ENCODE measurements at regions of chr1 and their contacts with region 1.

Region 1: DNA sequence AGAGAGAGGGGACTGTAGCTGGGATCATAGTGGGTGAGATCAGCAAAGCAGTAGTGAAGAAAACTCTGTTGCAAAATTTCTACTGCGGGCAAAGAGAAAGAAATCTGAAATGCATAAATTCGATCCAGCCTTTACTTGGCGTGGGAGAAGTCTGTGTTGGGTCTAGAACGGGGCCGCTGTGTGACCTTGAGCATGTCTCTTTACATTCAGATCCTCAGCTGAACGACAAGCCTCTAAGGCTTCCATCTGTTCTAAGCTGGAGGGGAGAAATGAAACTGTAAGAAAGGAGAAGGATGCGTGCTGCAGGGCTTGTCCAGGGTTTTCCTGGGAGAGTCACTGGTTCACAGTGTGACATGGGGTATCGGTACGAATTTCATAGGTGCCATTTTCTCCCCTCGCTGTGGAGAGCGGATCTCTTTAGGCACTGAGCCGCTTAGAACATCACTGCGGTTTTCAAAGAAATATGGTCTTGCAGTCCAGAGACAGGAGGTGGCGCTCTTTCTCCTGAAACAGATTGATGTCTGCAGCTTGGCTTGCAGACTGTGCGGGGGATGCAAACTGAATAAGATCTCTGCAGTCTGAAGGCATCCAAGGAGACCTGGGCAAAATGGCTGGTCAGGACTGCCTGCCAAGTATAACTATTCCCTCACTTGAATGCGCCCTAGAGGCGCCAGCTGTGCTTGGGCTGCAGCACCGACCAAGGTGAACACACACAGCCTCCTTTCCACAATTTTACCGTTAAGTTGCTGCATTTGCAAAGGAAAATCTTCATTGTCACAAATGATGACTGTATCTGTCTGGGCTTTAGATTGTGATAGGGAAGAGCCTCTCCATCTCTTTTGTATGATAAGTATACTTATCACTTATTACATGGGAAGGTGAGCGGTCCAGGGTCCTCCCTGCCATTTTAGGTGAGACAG is 104.1 kb downstream of the XCL2 start:
- DNase-seq: peak; percentile 45
- ATAC-seq: peak; percentile 97
- H3K4me3 ChIP-seq: no peak overlapping the region
- H3K27ac ChIP-seq: no peak overlapping the region
- H3K4me1 ChIP-seq: no peaks in the 10 kb centered on the region
- H3K27me3 ChIP-seq: no peaks in the 10 kb centered on the region; a peak in 1 of 4 replicates
- CTCF ChIP-seq: peak; percentile 66 to 84 (median 73)
- EP300 ChIP-seq: no peak
- POLR2A ChIP-seq: no peak
- RAD21 ChIP-seq: peak; percentile 93

Region 2: DNA sequence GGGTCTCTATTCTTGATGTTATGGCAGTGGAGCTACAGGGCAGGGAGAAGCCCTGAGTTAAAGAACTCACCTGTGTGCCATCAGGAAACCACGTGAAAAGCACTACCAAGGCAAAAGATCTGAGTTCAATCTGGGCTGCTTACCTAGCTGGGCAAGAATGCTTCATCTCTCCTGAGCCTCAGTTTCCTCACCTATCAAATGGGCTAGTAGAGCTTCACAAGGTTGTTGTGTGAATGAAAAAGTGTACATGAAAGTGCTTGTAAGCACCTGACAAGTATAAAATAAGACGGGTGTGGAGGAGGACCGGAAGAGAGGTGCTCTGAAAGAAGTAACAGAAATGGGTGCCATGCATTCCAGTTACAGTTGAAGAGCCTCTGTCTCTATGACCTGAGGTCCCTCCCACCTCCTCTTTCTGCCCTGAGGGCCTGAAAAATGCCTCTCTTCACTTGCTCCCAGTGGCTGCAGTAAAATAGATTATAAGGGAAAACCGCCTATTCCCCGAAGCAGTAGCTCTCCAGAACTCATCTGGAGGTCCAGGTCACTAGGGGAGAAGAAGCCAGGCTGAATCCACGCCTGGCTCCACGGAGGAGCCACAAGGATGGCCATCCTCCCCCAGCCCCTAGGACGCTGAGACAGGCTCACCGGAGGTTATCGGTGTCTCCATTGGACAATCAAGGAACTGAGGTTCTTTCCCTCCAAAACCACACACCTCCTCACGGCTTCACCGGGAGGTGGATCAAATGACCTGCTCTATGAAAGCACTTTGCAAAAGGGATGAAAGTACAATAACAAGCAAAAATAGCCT is 304.4 kb before region 1 on chr1:
- CTCF ChIA-PET with region 1: no interaction called
- POLR2A ChIA-PET with region 1: no interaction called
- RAD21 ChIA-PET with region 1: no interaction called
- SMC1A ChIA-PET with region 1: no interaction called
- in situ Hi-C with region 1: no loop called
- intact Hi-C with region 1: no loop called
- DNase-seq: no peak
- ATAC-seq: no peak
- H3K4me3 ChIP-seq: peak overlapping the region; percentile 63
- H3K27ac ChIP-seq: no peak overlapping the region
- H3K4me1 ChIP-seq: peaks cover 8% of the 10 kb centered on the region
- H3K27me3 ChIP-seq: peaks cover 11 to 20% of the 10 kb centered on the region in 2 experiments; a peak in 3 of 4 replicates
- CTCF ChIP-seq: no peak
- EP300 ChIP-seq: no peak
- POLR2A ChIP-seq: no peak
- RAD21 ChIP-seq: no peak

Region 3: DNA sequence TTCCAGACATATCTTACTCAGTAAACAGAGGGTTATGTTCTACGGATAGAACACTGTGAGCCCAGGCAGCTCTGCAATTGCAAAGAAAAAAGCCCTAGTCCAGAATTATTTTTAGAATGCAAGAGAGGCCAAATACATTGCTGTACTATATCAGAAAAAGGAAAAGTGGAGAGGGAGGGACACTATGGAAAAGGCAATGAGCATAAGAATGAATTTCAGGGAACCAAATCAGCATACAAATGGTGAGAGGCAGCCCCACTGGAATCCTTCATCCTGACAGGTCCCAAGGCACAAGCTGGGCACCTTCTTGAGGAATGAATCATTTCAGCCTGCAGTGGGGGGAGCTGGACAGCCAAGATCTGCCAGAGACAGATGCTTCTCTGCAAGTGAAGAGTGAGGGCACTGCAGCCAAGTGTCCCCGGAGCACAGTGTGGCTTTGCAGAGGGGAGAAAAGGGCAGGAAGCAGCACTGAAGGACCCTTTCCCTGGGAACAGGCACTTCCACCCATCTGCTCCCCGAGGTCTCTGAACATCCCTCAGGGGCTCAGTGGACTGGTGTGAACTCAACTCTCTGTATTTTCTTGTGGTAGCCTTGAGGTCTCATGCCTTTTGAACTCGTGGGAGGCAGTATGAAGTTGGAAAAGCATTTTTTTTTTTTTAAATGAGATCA is 11.5 kb before region 1 on chr1:
- CTCF ChIA-PET with region 1: interaction called, 8 read pairs
- POLR2A ChIA-PET with region 1: interaction called, 3 read pairs
- RAD21 ChIA-PET with region 1: interaction called, 9 read pairs
- SMC1A ChIA-PET with region 1: interaction called, 51 read pairs
- in situ Hi-C with region 1: no loop called
- intact Hi-C with region 1: no loop called
- DNase-seq: no peak
- ATAC-seq: no peak
- H3K4me3 ChIP-seq: no peak overlapping the region
- H3K27ac ChIP-seq: no peak overlapping the region
- H3K4me1 ChIP-seq: no peaks in the 10 kb centered on the region
- H3K27me3 ChIP-seq: no peaks in the 10 kb centered on the region; a peak in 1 of 4 replicates
- CTCF ChIP-seq: no peak
- EP300 ChIP-seq: no peak
- POLR2A ChIP-seq: no peak
- RAD21 ChIP-seq: no peak

Region 4: DNA sequence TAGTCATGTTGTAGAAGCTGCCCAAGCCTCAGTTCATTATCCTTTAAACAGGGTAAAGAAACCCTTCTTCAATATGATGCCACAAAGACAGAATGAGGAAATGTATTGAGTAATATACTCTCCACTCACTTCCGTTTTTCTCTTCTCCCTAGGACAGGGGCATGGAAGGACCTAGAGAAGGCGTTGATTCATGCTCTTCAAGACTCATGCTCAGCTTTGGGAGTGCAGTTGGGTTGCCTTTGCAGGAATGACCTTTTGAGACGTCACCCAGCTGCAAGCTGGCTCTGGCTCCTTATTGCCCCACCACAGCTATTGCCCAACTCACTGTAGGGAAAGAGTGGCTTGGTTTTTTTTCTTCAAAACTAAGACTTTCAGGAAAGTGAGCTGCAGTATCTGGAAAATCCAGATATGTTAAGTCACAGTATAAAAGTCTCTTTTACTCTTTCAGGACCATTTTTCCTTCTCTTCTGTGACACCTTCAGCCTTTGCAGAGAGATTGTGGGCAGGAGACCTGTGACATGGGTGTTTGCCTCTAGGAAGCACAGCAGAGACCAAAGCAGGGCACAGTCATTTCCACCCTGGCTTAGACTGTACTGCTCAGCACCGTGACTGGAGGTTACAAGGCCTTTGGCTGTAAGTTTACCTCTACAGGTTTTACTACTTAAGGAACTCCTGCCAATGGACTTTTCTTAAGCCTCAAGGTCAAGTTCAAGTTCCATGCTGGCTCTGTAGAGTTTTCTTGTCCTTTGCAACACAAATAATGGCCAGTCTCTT is 64.5 kb after region 1 on chr1:
- CTCF ChIA-PET with region 1: interaction called, 28 read pairs
- POLR2A ChIA-PET with region 1: interaction called, 13 read pairs
- RAD21 ChIA-PET with region 1: interaction called, 114 read pairs
- SMC1A ChIA-PET with region 1: interaction called, 136 read pairs
- in situ Hi-C with region 1: no loop called
- intact Hi-C with region 1: no loop called
- DNase-seq: peak; percentile 60
- ATAC-seq: peak; percentile 87
- H3K4me3 ChIP-seq: no peak overlapping the region
- H3K27ac ChIP-seq: no peak overlapping the region
- H3K4me1 ChIP-seq: peaks cover 1% of the 10 kb centered on the region
- H3K27me3 ChIP-seq: no peaks in the 10 kb centered on the region
- CTCF ChIP-seq: no peak
- EP300 ChIP-seq: peak in 1 of 2 experiments; percentile 47; a peak in 1 of 4 replicates
- POLR2A ChIP-seq: no peak
- RAD21 ChIP-seq: no peak

Region 5: DNA sequence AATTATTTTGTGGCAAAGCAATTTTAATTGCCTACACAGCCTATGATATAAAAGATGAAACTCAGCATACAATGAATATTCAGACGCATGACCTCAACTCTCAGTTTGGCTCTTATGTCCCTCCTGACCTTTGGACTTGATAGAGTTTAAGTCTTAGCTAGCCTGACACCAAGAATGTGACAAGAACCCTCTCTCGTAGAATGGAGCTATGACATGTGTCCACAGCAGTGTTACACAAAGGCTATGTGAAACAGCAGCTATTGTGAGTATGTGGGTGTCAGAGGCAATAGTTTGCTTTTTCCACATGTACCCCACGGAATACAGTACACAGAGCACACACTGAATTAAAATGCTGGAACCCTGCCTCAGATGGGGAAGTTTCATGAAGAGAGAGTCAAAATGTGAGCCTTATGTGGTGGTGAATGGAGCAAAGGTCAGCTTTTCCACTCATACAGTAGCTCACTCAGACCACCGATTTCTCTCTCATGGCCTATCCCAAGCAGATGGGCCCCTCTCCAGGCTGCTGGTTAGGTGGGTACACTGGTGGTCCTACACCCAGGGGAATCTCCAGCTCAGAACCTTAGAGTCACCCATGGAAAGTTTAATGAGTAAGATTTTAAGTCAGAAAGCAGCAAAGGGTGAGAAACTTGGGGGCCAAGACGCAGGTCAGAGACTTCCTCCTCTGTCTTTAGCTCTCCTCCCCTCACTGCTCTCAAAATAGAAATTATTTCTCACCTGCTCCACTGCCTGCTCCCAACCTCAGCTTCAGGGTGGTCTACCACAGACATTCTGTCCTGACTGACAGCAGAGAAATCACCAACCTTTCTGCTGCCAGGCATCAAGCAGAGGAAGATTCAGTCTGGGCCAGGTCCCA is 114.2 kb after region 1 on chr1:
- CTCF ChIA-PET with region 1: interaction called, 28 read pairs
- POLR2A ChIA-PET with region 1: interaction called, 4 read pairs
- RAD21 ChIA-PET with region 1: interaction called, 70 read pairs
- SMC1A ChIA-PET with region 1: interaction called, 100 read pairs
- in situ Hi-C with region 1: no loop called
- intact Hi-C with region 1: no loop called
- DNase-seq: no peak
- ATAC-seq: peak; percentile 70
- H3K4me3 ChIP-seq: no peak overlapping the region
- H3K27ac ChIP-seq: no peak overlapping the region
- H3K4me1 ChIP-seq: no peaks in the 10 kb centered on the region; the same call in 1 of the 2 replicates
- H3K27me3 ChIP-seq: no peaks in the 10 kb centered on the region
- CTCF ChIP-seq: no peak
- EP300 ChIP-seq: peak in 1 of 2 experiments; percentile 13; a peak in 2 of 4 replicates
- POLR2A ChIP-seq: no peak
- RAD21 ChIP-seq: no peak

Region 6: DNA sequence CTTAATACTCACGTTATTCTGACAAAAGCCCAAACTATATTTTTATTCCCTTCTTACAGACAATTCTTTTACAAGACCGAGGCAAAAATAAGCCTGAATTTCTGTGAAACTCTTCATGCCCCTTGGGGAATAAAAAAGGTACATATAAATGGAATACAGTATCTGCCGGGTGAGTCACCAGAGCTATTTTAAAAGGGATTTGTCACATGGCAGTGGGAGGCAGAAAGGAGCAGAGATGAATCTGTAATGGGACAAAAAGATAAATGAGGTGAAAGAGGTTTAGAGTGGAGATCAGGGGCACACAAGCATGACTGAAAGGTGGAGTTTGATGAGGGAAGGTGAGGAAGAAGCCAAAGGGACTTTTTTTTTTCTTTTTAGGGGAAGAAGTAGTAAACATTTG is 145.5 kb after region 1 on chr1:
- CTCF ChIA-PET with region 1: interaction called, 26 read pairs
- POLR2A ChIA-PET with region 1: interaction called, 3 read pairs
- RAD21 ChIA-PET with region 1: interaction called, 13 read pairs
- SMC1A ChIA-PET with region 1: interaction called, 13 read pairs
- in situ Hi-C with region 1: no loop called
- intact Hi-C with region 1: no loop called
- DNase-seq: no peak
- ATAC-seq: no peak
- H3K4me3 ChIP-seq: no peak overlapping the region
- H3K27ac ChIP-seq: no peak overlapping the region
- H3K4me1 ChIP-seq: no peaks in the 10 kb centered on the region
- H3K27me3 ChIP-seq: peaks cover 0 to 2% of the 10 kb centered on the region in 2 experiments; a peak in 1 of 4 replicates
- CTCF ChIP-seq: no peak
- EP300 ChIP-seq: no peak
- POLR2A ChIP-seq: no peak
- RAD21 ChIP-seq: no peak

Region 7: GRCh38 chr1:169106095-169106920 is 666.6 kb after region 1 on chr1 and contains the start of gene ATP1B1:
- CTCF ChIA-PET with region 1: interaction called, 9 read pairs
- POLR2A ChIA-PET with region 1: no interaction called
- RAD21 ChIA-PET with region 1: interaction called, 10 read pairs
- SMC1A ChIA-PET with region 1: interaction called, 11 read pairs
- in situ Hi-C with region 1: no loop called
- intact Hi-C with region 1: no loop called
- DNase-seq: no peak
- ATAC-seq: peak; percentile 94
- H3K4me3 ChIP-seq: peak within 1 kb of the TSS; percentile 86
- H3K27ac ChIP-seq: no peak within 1 kb of the TSS
- H3K4me1 ChIP-seq: peaks cover 3% of the 10 kb centered on the region; the same call in 1 of the 2 replicates
- H3K27me3 ChIP-seq: peaks cover 2 to 6% of the 10 kb centered on the region in 2 experiments; a peak in 2 of 4 replicates
- CTCF ChIP-seq: peak in 2 of 3 experiments; percentile 21 to 36; a peak in 3 of 6 replicates
- EP300 ChIP-seq: no peak
- POLR2A ChIP-seq: peak; percentile 84
- RAD21 ChIP-seq: no peak
- polyA plus RNA-seq, gene ATP1B1: 0.84 to 0.90 TPM

Measured in GM12878 (cell line).